ENCODE measurements at regions of chr10 and their contacts with region 1.

Region 1: DNA sequence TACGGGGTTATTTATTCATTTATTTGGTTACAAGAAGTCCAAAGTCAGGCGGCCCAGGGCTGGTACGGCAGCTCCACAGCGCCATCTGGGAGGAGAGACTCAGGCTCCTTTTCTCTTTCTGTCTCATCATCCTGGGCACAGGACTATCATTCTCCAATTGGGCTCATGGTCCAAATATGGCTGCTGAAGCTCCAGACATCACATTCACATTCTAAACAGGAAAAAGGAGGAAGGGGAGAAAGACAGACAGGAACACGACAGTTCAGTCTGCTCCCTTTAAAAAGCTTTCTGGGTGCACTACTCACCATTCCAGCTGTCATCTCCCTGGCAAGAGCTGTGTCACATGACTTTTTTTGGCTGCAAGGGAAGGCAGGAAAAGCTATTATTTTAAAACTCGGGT is 74.4 kb upstream of the PDZD8 start:
- DNase-seq: no peak
- H3K4me3 ChIP-seq: no peak overlapping the region
- H3K27ac ChIP-seq: no peak overlapping the region
- H3K4me1 ChIP-seq: no peaks in the 10 kb centered on the region
- H3K27me3 ChIP-seq: no peaks in the 10 kb centered on the region
- CTCF ChIP-seq: no peak

Region 2: DNA sequence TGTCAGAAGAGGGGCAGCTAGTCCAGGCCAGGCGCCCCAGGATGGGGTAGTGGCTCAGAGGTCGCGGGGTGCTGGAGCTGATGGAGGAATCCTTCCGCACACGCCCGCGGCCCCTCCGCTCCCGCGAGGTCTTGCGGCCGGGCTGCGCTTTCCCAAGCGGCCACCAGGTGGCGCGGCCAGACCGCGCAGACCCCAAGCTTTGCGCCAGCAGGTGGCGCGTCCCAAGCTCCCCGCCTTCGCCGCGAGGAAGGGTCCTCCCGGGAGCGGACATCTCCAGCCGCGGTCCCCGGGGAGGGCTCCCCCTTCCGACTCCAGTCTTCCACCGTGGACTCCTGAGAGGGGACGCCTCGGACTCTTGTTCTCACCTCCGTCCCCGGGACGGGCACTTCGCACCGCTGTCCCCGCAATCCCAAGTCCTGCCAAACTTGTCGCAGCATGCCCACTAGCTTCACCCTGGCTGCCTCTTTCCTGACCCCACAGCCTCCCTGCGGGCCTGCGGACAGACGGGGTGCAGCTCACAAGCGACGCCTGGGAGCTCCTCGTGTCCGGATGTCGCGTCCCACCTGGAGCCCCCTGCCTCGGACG is 232.9 kb before region 1 on chr10:
- intact Hi-C with region 1: loop called (anchors 5 kb)
- DNase-seq: peak; percentile 66
- H3K4me3 ChIP-seq: peak overlapping the region; percentile 32
- H3K27ac ChIP-seq: no peak overlapping the region
- H3K4me1 ChIP-seq: peaks cover 9% of the 10 kb centered on the region
- H3K27me3 ChIP-seq: peaks cover 8% of the 10 kb centered on the region
- CTCF ChIP-seq: peak; percentile 100

Region 3: GRCh38 chr10:117228210-117228609 is 221.4 kb before region 1 on chr10:
- intact Hi-C with region 1: no loop called
- DNase-seq: no peak
- H3K4me3 ChIP-seq: no peak overlapping the region
- H3K27ac ChIP-seq: no peak overlapping the region
- H3K4me1 ChIP-seq: no peaks in the 10 kb centered on the region
- H3K27me3 ChIP-seq: no peaks in the 10 kb centered on the region
- CTCF ChIP-seq: no peak

Measured in colonic mucosa (tissue), 4 donors.